H1 (cell line): ENCODE measurements at regions of chr5 and their contacts with region 1.

Region 1: DNA sequence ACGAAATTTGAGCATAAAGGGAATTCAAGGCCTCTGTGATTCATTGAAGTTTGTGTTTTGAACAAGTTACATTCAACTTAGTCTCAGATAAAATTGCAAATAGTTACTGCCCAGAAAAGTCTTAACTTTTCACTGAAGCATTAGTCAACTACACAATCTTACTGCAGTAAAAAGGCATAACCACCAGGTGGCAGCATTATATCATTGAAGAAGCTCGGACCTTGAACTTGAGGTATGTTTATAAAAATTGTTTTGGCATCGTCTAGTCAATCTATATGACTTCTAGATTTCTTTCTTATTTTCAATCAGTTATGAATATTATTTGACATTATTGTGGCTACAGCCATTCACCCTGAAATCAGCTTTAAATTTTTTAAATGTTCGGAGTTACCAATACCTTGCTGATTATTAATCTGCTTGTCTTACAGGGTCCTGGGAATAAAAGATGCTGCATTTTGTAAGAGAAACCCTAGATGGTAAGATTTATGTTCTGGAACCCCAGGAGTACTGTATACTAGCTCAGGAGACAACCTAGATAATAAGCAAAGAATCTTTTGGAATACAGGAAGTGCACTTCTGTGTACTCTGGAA is 83.9 kb upstream of the GRAMD2B start:
- DNase-seq: no peak
- H3K4me3 ChIP-seq: no peak overlapping the region
- H3K27ac ChIP-seq: no peak overlapping the region
- H3K4me1 ChIP-seq: peaks cover 0 to 3% (median 0%) of the 10 kb centered on the region in 4 experiments; a peak in 1 of 7 replicates
- H3K27me3 ChIP-seq: no peaks in the 10 kb centered on the region
- CTCF ChIP-seq: peak in 2 of 3 experiments; percentile 61 to 71; a peak in 3 of 4 replicates
- EP300 ChIP-seq: no peak
- POLR2A ChIP-seq: no peak
- RAD21 ChIP-seq: peak; percentile 90 to 92

Region 2: DNA sequence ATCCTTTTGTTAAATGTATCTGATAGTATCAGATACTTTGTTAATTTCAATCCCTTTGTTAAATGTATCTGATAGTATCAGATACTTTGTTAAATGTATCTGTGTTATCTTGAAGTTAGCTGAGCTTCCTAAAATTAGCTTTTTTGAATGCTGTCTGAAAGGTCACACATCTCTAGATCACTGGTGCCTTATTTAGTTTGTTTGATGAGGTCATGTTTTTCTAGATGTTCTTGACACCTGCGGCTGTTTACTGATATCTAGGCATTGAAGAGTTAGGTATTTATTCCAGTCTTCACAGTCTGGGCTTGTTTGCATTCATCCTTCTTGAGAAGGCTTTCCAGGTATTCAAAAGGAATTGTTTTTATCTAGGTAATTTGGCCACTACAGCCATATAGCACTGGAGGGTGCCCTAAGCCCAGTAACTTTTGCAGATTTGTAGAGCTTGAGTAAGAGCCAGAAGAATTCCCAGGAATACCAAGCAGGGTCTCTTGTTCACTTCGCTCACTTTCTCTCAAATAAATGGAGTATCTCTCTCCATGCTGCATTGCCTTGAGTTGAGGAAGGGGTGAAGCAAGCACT is 351.5 kb before region 1 on chr5:
- CTCF ChIA-PET with region 1: interaction called, 26 read pairs
- POLR2A ChIA-PET with region 1: no interaction called
- DNase-seq: peak in 1 of 2 experiments; percentile 9
- H3K4me3 ChIP-seq: no peak overlapping the region
- H3K27ac ChIP-seq: no peak overlapping the region
- H3K4me1 ChIP-seq: no peaks in the 10 kb centered on the region; a peak in 1 of 7 replicates
- H3K27me3 ChIP-seq: no peaks in the 10 kb centered on the region
- CTCF ChIP-seq: peak in 2 of 3 experiments; percentile 34 to 42; a peak in 3 of 4 replicates
- EP300 ChIP-seq: no peak
- POLR2A ChIP-seq: no peak
- RAD21 ChIP-seq: peak; percentile 78 to 85

Region 3: GRCh38 chr5:126280846-126281245 is 58.5 kb before region 1 on chr5:
- CTCF ChIA-PET with region 1: no interaction called
- POLR2A ChIA-PET with region 1: no interaction called
- DNase-seq: no peak
- H3K4me3 ChIP-seq: no peak overlapping the region
- H3K27ac ChIP-seq: no peak overlapping the region
- H3K4me1 ChIP-seq: 0 out of 7 replicates have a peak, but pooled peaks cover 0 to 2% (median 0%) of the 10 kb centered on the region in 4 experiments
- H3K27me3 ChIP-seq: no peaks in the 10 kb centered on the region
- CTCF ChIP-seq: no peak
- EP300 ChIP-seq: no peak
- POLR2A ChIP-seq: no peak
- RAD21 ChIP-seq: no peak

Region 4: DNA sequence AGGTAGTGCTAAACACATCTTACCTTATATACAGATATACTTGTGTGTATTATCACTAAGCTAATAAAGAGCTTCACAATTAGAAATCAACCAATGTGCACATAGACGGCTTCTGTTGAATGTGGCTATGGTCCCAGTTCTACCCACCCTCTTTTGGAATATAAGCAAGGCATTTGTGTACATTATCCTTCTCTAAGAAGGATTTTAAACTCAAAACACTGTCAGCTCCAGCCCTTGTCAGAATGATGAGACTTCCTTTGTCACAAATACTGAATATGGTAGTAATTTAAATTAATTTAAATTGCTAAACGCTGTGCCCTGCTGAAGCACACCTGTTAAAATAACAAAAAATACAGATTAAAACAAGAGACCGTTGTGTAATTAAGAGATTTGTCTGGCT is 24.0 kb before region 1 on chr5:
- CTCF ChIA-PET with region 1: interaction called, 11 read pairs
- POLR2A ChIA-PET with region 1: no interaction called
- DNase-seq: no peak
- H3K4me3 ChIP-seq: no peak overlapping the region
- H3K27ac ChIP-seq: no peak overlapping the region
- H3K4me1 ChIP-seq: no peaks in the 10 kb centered on the region
- H3K27me3 ChIP-seq: no peaks in the 10 kb centered on the region; a peak in 1 of 7 replicates
- CTCF ChIP-seq: no peak
- EP300 ChIP-seq: no peak
- POLR2A ChIP-seq: no peak
- RAD21 ChIP-seq: no peak

Region 5: DNA sequence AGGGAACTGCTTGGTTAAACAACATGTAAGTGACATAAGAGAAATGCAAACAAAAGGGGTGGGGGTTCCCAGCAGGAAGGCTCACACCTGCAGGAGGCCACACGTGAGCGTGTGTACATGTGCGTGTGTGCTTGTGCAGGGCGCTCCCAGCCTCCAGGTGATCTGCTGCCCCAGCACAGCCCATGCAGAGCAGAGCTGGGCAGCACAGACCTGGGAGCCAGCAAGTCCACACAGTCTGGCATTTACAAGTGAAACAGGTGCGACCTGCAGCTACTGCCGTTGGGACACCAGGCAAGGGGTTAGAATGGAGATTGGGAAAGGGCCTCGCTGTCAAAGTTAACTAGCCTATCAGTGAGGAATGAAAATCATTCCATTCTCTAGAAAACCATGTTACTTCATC is 125.7 kb after region 1 on chr5:
- CTCF ChIA-PET with region 1: interaction called, 13 read pairs
- POLR2A ChIA-PET with region 1: no interaction called
- DNase-seq: no peak
- H3K4me3 ChIP-seq: no peak overlapping the region
- H3K27ac ChIP-seq: no peak overlapping the region
- H3K4me1 ChIP-seq: peaks cover 0 to 3% (median 0%) of the 10 kb centered on the region in 4 experiments; a peak in 1 of 7 replicates
- H3K27me3 ChIP-seq: no peaks in the 10 kb centered on the region; a peak in 2 of 7 replicates
- CTCF ChIP-seq: no peak
- EP300 ChIP-seq: no peak
- POLR2A ChIP-seq: no peak
- RAD21 ChIP-seq: no peak

Region 6: GRCh38 chr5:126499853-126500342 is 160.6 kb after region 1 on chr5:
- CTCF ChIA-PET with region 1: interaction called, 36 read pairs
- POLR2A ChIA-PET with region 1: no interaction called
- DNase-seq: peak; percentile 9 to 48
- H3K4me3 ChIP-seq: no peak overlapping the region
- H3K27ac ChIP-seq: no peak overlapping the region
- H3K4me1 ChIP-seq: no peaks in the 10 kb centered on the region; a peak in 1 of 7 replicates
- H3K27me3 ChIP-seq: no peaks in the 10 kb centered on the region
- CTCF ChIP-seq: peak in 2 of 3 experiments; percentile 59 to 83; a peak in 3 of 4 replicates
- EP300 ChIP-seq: no peak
- POLR2A ChIP-seq: no peak
- RAD21 ChIP-seq: peak; percentile 56 to 64

Region 7: GRCh38 chr5:126536874-126537273 is 197.6 kb after region 1 on chr5:
- CTCF ChIA-PET with region 1: interaction called, 76 read pairs
- POLR2A ChIA-PET with region 1: interaction called, 3 read pairs
- DNase-seq: peak in 1 of 2 experiments; percentile 22
- H3K4me3 ChIP-seq: no peak overlapping the region
- H3K27ac ChIP-seq: no peak overlapping the region
- H3K4me1 ChIP-seq: peaks cover 0 to 2% (median under 1%) of the 10 kb centered on the region in 4 experiments; a peak in 3 of 7 replicates
- H3K27me3 ChIP-seq: no peaks in the 10 kb centered on the region
- CTCF ChIP-seq: no peak
- EP300 ChIP-seq: no peak
- POLR2A ChIP-seq: no peak
- RAD21 ChIP-seq: no peak